ENCODE measurements at regions of chr3 and their contacts with region 1.

Region 1: DNA sequence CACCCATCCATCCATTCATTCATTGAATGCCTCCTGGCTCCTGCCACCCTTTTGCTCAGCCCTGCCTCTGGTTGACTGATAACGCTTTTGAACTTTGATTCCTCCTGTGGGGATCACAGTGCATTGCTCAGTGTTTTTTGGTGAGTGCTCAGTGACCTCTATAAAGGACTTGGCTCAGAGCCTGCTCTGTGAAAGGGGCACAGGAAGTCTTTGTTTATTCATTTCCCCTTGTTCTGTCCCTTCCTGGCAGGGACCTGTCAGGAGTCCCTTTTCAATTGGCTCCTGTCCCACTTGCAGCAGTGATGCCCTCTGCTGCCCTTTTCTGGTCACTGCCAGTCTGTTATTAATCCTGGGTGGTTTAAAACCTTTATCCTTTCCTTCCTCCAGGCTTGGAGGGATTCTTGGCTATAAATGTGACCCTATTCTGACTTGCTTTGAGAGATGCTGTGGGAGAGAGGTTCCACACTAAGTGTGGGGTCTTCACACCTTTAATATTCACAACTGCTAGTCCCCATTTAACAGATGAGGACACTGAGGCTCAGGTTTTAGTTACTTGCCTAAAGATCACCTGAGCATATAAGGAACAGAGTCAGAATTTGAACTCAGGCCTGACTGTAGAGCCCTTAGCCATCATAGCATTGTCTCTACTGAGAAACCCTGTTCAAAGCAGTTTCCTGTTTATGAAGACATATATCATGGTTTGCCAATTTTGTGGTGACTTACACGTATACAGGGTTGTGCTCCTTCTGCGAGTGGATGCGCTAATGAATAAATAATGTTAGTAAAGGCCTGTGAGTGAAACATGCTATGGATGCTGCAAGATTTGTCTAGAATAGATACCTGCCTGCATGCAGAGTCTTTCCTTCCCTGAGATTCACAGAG is 23.2 kb upstream of the TATDN2 start:
- DNase-seq: peak; percentile 88
- H3K4me3 Mint-ChIP-seq: no peak overlapping the region
- H3K27ac Mint-ChIP-seq: peak overlapping the region; percentile 79
- H3K4me1 Mint-ChIP-seq: peaks cover 58% of the 10 kb centered on the region
- H3K27me3 Mint-ChIP-seq: no peaks in the 10 kb centered on the region

Region 2: GRCh38 chr3:9986237-9986725 is 238.7 kb before region 1 on chr3:
- CTCF ChIA-PET with region 1: interaction called, 5 read pairs
- intact Hi-C with region 1: loop called (anchors 1 kb)
- DNase-seq: no peak
- H3K4me3 Mint-ChIP-seq: peak overlapping the region; percentile 97
- H3K27ac Mint-ChIP-seq: peak overlapping the region; percentile 99
- H3K4me1 Mint-ChIP-seq: peaks cover 39% of the 10 kb centered on the region
- H3K27me3 Mint-ChIP-seq: no peaks in the 10 kb centered on the region

Region 3: DNA sequence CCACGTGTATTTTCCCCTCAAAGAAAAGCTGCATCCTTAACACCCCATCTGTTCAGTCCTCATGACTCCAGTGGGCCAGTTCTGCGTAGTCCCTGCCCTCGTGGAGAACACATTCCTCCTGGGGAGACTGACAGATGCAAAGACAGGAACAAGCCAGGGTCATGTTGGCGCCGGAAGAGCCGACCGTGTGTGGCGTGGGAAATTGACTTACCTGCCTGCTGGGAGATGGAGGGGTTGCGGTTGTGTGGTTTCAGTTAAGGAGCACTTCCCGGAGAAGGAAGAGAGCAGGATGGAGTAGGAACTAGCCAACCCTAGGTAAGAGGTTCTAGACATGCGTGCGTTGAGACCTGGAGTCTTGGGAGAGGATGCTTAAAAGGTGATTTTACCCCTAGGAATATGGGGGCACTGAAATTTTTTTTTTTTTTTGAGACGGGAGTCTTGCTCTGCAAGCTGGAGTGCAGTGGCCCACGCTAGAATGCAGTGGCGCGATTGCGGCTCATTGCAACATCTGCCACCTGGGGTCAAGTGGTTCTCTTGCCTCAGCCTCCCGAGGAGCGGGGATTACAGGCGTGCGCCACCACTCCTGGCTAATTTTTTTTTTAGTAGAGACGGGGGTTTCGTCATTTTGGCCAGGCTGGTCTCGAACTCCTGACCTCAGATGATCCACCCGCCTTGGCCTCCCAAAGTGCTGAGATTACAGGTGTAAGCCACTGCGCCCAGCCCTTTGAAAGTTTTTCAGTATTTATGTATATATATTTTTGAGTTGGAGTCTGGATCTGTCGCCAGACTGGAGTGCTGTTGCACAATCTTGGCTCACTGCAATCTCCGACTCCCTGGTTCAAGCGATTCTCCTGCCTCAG is 82.1 kb before region 1 on chr3:
- CTCF ChIA-PET with region 1: interaction called, 5 read pairs
- intact Hi-C with region 1: loop called (anchors 1 kb)
- DNase-seq: peak; percentile 48
- H3K4me3 Mint-ChIP-seq: peak overlapping the region; percentile 84
- H3K27ac Mint-ChIP-seq: peak overlapping the region; percentile 87
- H3K4me1 Mint-ChIP-seq: peaks cover 32% of the 10 kb centered on the region
- H3K27me3 Mint-ChIP-seq: no peaks in the 10 kb centered on the region

Region 4: GRCh38 chr3:10164546-10165393 is 60.3 kb before region 1 on chr3 and contains the start of gene IRAK2:
- CTCF ChIA-PET with region 1: interaction called, 16 read pairs
- intact Hi-C with region 1: loop called (anchors 1 kb)
- DNase-seq: peak; percentile 62
- H3K4me3 Mint-ChIP-seq: peak within 1 kb of the TSS; percentile 75
- H3K27ac Mint-ChIP-seq: no peak within 1 kb of the TSS
- H3K4me1 Mint-ChIP-seq: peaks cover 23% of the 10 kb centered on the region
- H3K27me3 Mint-ChIP-seq: no peaks in the 10 kb centered on the region
- total RNA-seq, gene IRAK2: 6.4 to 6.9 TPM

Region 5: GRCh38 chr3:10198761-10199649 is 26.0 kb before region 1 on chr3:
- CTCF ChIA-PET with region 1: interaction called, 15 read pairs
- intact Hi-C with region 1: loop called (anchors 1 kb)
- DNase-seq: peak; percentile 91
- H3K4me3 Mint-ChIP-seq: peak overlapping the region; percentile 22
- H3K27ac Mint-ChIP-seq: peak overlapping the region; percentile 98
- H3K4me1 Mint-ChIP-seq: peaks cover 71% of the 10 kb centered on the region
- H3K27me3 Mint-ChIP-seq: no peaks in the 10 kb centered on the region

Region 6: GRCh38 chr3:10242182-10243065 is 17.4 kb after region 1 on chr3:
- CTCF ChIA-PET with region 1: interaction called, 4 read pairs
- intact Hi-C with region 1: loop called (anchors 1 kb)
- DNase-seq: peak; percentile 91
- H3K4me3 Mint-ChIP-seq: peak overlapping the region; percentile 36
- H3K27ac Mint-ChIP-seq: peak overlapping the region; percentile 83
- H3K4me1 Mint-ChIP-seq: peaks cover 64% of the 10 kb centered on the region
- H3K27me3 Mint-ChIP-seq: no peaks in the 10 kb centered on the region

Region 7: DNA sequence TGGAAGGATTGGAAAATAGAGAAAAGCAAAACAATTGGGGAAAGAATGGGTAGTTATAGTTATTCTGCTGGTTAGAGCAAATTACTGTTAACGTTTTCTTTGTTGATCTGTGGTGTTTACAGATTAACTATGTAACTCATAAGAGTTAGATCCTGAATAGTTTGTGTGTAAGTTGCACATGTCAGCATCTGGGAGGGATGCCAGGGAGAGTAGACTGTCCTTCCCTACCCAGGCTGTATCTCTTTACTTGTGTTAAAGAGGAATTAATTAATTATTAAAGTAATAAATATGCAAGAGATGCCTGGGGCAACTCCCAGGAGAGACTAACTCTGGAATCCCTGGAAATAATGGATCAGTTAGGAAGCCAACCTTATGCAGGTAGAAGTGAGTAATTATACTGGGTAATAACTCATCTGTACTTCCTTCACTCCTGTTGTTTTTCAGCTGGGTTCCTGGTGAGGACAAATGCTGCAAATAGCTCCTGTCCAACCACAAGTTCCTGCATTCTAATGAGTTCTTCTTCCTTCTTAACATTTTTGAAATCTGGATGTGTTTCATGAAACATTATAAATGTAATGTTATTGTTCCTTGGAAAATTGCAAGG is 48.8 kb after region 1 on chr3:
- CTCF ChIA-PET with region 1: no interaction called
- intact Hi-C with region 1: no loop called
- DNase-seq: no peak
- H3K4me3 Mint-ChIP-seq: no peak overlapping the region
- H3K27ac Mint-ChIP-seq: no peak overlapping the region
- H3K4me1 Mint-ChIP-seq: peaks cover 48% of the 10 kb centered on the region
- H3K27me3 Mint-ChIP-seq: no peaks in the 10 kb centered on the region